ENCODE measurements at regions of chr13 and their contacts with region 1.

Region 1: DNA sequence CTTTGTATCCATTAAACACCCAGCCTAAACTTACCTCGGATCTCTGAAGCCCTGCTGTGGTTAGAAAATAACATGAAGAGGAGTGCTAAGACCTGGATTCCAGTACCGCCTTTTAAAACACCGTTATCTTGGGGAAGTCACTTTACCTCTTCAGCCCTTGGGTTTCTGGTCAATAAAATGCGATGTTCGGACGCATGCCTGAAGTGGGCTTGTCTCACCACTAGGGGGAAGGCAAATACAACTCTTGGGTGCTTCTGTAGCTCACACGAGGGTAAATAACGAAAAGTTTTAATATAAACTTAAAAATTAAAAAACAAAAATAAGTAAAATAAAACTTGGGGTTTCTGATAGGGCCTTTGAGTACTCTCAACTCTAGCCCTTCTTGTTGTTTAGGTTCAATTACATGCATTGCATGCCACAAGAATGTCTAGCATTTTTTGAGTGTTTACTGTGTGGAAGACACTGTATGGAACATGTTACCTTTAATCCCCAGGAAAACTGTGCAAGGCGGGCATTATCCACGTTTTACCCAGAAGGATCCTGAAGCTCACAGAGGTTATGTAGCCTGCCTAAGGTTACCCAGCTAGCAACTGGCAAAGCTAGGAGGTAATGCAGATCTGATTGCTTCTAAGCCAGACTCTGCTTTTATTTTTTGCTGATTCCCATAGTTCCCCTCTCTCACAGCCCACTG is 240.4 kb downstream of the LMO7 start:
- DNase-seq: peak; percentile 66
- H3K4me3 Mint-ChIP-seq: no peak overlapping the region
- H3K27ac Mint-ChIP-seq: no peak overlapping the region
- H3K4me1 Mint-ChIP-seq: peaks cover 10% of the 10 kb centered on the region
- H3K27me3 Mint-ChIP-seq: no peaks in the 10 kb centered on the region

Region 2: GRCh38 chr13:75749407-75749806 is 127.1 kb before region 1 on chr13:
- CTCF ChIA-PET with region 1: no interaction called
- POLR2A ChIA-PET with region 1: no interaction called
- intact Hi-C with region 1: no loop called
- DNase-seq: no peak
- H3K4me3 Mint-ChIP-seq: no peak overlapping the region
- H3K27ac Mint-ChIP-seq: no peak overlapping the region
- H3K4me1 Mint-ChIP-seq: no peaks in the 10 kb centered on the region
- H3K27me3 Mint-ChIP-seq: no peaks in the 10 kb centered on the region

Region 3: DNA sequence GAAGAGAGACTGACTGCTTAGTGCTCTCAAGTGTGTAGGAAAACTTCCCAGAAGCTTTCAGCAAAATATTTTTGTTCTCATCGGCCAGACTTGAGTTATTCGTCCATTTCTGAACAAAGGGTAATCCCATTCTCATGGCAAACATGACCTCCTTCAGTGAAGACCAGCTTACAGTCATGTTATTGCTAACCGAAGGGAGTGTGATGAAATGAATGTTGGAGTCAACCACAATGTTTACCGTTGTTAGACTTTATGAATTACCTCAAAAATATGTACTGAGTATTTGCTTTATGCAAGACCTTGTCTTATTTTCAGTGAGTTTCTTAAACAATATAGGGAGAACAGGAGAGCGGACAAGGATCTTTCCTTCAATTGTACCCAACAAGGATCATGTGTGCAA is 11.8 kb before region 1 on chr13:
- CTCF ChIA-PET with region 1: interaction called, 11 read pairs
- POLR2A ChIA-PET with region 1: no interaction called
- intact Hi-C with region 1: no loop called
- DNase-seq: no peak
- H3K4me3 Mint-ChIP-seq: no peak overlapping the region
- H3K27ac Mint-ChIP-seq: no peak overlapping the region
- H3K4me1 Mint-ChIP-seq: peaks cover 2% of the 10 kb centered on the region
- H3K27me3 Mint-ChIP-seq: no peaks in the 10 kb centered on the region

Region 4: GRCh38 chr13:75908141-75908540 is 31.6 kb after region 1 on chr13:
- CTCF ChIA-PET with region 1: interaction called, 3 read pairs
- POLR2A ChIA-PET with region 1: no interaction called
- intact Hi-C with region 1: loop called (anchors 2 kb)
- DNase-seq: no peak
- H3K4me3 Mint-ChIP-seq: no peak overlapping the region
- H3K27ac Mint-ChIP-seq: no peak overlapping the region
- H3K4me1 Mint-ChIP-seq: no peaks in the 10 kb centered on the region
- H3K27me3 Mint-ChIP-seq: peaks cover 11% of the 10 kb centered on the region

Region 5: GRCh38 chr13:76016799-76017400 is 140.4 kb after region 1 on chr13:
- CTCF ChIA-PET with region 1: interaction called, 13 read pairs
- POLR2A ChIA-PET with region 1: no interaction called
- intact Hi-C with region 1: loop called (anchors 2 kb)
- DNase-seq: peak; percentile 20
- H3K4me3 Mint-ChIP-seq: no peak overlapping the region
- H3K27ac Mint-ChIP-seq: no peak overlapping the region
- H3K4me1 Mint-ChIP-seq: no peaks in the 10 kb centered on the region
- H3K27me3 Mint-ChIP-seq: no peaks in the 10 kb centered on the region

Region 6: GRCh38 chr13:76473552-76474134 is 597.1 kb after region 1 on chr13:
- CTCF ChIA-PET with region 1: interaction called, 82 read pairs
- POLR2A ChIA-PET with region 1: no interaction called
- intact Hi-C with region 1: loop called (anchors 1 kb)
- DNase-seq: peak; percentile 76
- H3K4me3 Mint-ChIP-seq: no peak overlapping the region
- H3K27ac Mint-ChIP-seq: no peak overlapping the region
- H3K4me1 Mint-ChIP-seq: no peaks in the 10 kb centered on the region
- H3K27me3 Mint-ChIP-seq: peaks cover 11% of the 10 kb centered on the region

Region 7: GRCh38 chr13:76848596-76848995 is 972.1 kb after region 1 on chr13:
- CTCF ChIA-PET with region 1: no interaction called
- POLR2A ChIA-PET with region 1: no interaction called
- intact Hi-C with region 1: no loop called
- DNase-seq: no peak
- H3K4me3 Mint-ChIP-seq: no peak overlapping the region
- H3K27ac Mint-ChIP-seq: no peak overlapping the region
- H3K4me1 Mint-ChIP-seq: no peaks in the 10 kb centered on the region
- H3K27me3 Mint-ChIP-seq: peaks cover 2% of the 10 kb centered on the region

Region 8: GRCh38 chr13:76886292-76887075 is 1010.0 kb after region 1 on chr13 and contains the start of gene KCTD12:
- CTCF ChIA-PET with region 1: interaction called, 6 read pairs
- POLR2A ChIA-PET with region 1: no interaction called
- intact Hi-C with region 1: loop called (anchors 5 kb)
- DNase-seq: peak; percentile 77
- H3K4me3 Mint-ChIP-seq: peak within 1 kb of the TSS; percentile 84
- H3K27ac Mint-ChIP-seq: peak within 1 kb of the TSS; percentile 50
- H3K4me1 Mint-ChIP-seq: peaks cover 30% of the 10 kb centered on the region
- H3K27me3 Mint-ChIP-seq: peaks cover 12% of the 10 kb centered on the region
- total RNA-seq, gene KCTD12: 6.1 to 6.7 TPM

Region 9: DNA sequence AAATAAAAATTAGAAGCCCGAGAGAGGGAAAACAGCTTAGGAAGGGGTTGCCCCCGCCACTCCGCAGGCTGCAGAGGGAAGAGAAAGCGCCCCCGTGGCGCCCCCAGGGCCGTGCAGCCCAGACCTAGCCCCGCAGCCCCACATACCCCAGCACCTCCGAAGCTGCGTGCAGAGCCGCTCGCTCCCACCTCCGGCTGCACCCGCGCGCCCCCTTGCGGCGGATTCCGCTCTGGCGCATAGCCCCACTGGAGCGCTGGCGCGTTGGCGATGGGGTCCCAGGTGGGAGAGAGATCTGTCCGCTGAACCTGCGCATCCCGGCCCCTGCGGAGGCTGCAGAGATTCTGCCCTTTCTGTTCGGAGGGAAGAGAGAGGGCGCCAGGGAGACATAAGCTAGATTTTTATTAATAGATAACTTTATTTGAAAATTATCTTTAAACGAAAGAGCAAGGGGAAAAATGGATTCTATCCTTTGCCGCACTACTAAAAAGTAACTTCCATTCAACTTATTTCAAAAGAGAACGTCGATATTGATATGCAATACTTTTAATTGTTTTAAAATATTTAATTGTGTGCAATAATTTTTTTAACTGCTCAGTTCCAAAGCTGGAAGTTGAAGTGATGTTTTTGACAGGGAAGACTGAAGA is 1103.7 kb after region 1 on chr13:
- CTCF ChIA-PET with region 1: interaction called, 4 read pairs
- POLR2A ChIA-PET with region 1: no interaction called
- intact Hi-C with region 1: loop called (anchors 2 kb)
- DNase-seq: peak; percentile 88
- H3K4me3 Mint-ChIP-seq: no peak overlapping the region
- H3K27ac Mint-ChIP-seq: no peak overlapping the region
- H3K4me1 Mint-ChIP-seq: peaks cover 6% of the 10 kb centered on the region
- H3K27me3 Mint-ChIP-seq: peaks cover 17% of the 10 kb centered on the region